ENCODE measurements at regions of chrX and their contacts with region 1.

Region 1: DNA sequence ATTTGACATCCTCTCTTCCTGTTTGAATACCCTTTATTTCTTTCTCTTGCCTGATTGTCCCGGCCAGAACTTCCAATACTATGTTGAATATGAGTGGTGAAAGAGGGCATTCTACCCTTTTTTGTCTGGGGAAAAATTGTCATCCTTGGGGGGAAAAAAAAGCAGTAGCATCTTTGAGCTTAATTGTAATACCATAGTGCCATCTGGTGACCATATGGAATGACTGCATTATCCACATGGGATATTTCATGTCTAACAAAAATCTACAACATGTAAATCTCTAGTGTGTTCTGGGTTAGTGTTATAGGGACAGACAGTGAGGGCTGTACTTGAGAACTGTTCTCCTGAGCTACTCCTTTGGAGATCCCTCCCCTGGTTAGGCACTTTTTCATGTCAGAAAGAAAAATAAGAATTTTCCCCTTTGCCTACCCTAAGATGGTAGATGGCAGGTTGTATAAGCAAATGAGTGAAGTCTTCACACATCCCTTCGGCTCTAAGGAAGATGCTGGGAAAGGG is 26.0 kb downstream of the CAPN6 start:
- DNase-seq: peak in 3 of 14 experiments; percentile 3 to 11 (median 10)
- ATAC-seq: no peak
- H3K4me3 ChIP-seq: no peak overlapping the region
- H3K4me3 Mint-ChIP-seq: no peak overlapping the region
- H3K27ac ChIP-seq: no peak overlapping the region
- H3K27ac Mint-ChIP-seq: no peak overlapping the region
- H3K4me1 ChIP-seq: no peaks in the 10 kb centered on the region
- H3K4me1 Mint-ChIP-seq: no peaks in the 10 kb centered on the region
- H3K27me3 ChIP-seq: no peaks in the 10 kb centered on the region
- H3K27me3 Mint-ChIP-seq: peaks cover 3% of the 10 kb centered on the region
- CTCF ChIP-seq: no peak

Region 2: GRCh38 chrX:110450050-110450449 is 794.2 kb before region 1 on chrX:
- CTCF ChIA-PET with region 1: no interaction called
- POLR2A ChIA-PET with region 1: no interaction called
- intact Hi-C with region 1: loop called in 1 of 2 experiments (anchors 10 kb)
- DNase-seq: peak; percentile 10 to 64 (median 37)
- ATAC-seq: peak; percentile 48
- H3K4me3 ChIP-seq: no peak overlapping the region
- H3K4me3 Mint-ChIP-seq: no peak overlapping the region
- H3K27ac ChIP-seq: no peak overlapping the region
- H3K27ac Mint-ChIP-seq: no peak overlapping the region
- H3K4me1 ChIP-seq: no peaks in the 10 kb centered on the region
- H3K4me1 Mint-ChIP-seq: no peaks in the 10 kb centered on the region
- H3K27me3 ChIP-seq: no peaks in the 10 kb centered on the region
- H3K27me3 Mint-ChIP-seq: peaks cover 9% of the 10 kb centered on the region
- CTCF ChIP-seq: peak; percentile 53

Region 3: GRCh38 chrX:110992611-110993010 is 251.7 kb before region 1 on chrX:
- CTCF ChIA-PET with region 1: no interaction called
- POLR2A ChIA-PET with region 1: no interaction called
- intact Hi-C with region 1: loop called (anchors 5 to 10 kb)
- DNase-seq: peak in 10 of 14 experiments; percentile 0 to 56 (median 6)
- ATAC-seq: no peak
- H3K4me3 ChIP-seq: no peak overlapping the region
- H3K4me3 Mint-ChIP-seq: no peak overlapping the region
- H3K27ac ChIP-seq: no peak overlapping the region
- H3K27ac Mint-ChIP-seq: no peak overlapping the region
- H3K4me1 ChIP-seq: no peaks in the 10 kb centered on the region
- H3K4me1 Mint-ChIP-seq: no peaks in the 10 kb centered on the region
- H3K27me3 ChIP-seq: peaks cover 0 to 5% of the 10 kb centered on the region in 2 experiments
- H3K27me3 Mint-ChIP-seq: peaks cover 18% of the 10 kb centered on the region
- CTCF ChIP-seq: peak; percentile 21